Heart left ventricle (tissue), 16 donors: ENCODE measurements at regions of chr2 and their contacts with region 1.

Region 1: GRCh38 chr2:9813312-9814133 is 29.8 kb upstream of the TAF1B start:
- DNase-seq: peak in 4 of 5 donors; percentile 58 to 78 (median 70)
- ATAC-seq: peak; percentile 69 to 90 (median 82)
- H3K4me3 ChIP-seq: peak overlapping the region in 9 of 12 donors; percentile 1 to 37 (median 17)
- H3K27ac ChIP-seq: no peak overlapping the region
- H3K4me1 ChIP-seq: peaks cover 3 to 16% (median 11%) of the 10 kb centered on the region in 12 donors
- H3K27me3 ChIP-seq: no peaks in the 10 kb centered on the region
- CTCF ChIP-seq: peak; percentile 84 to 95 (median 91)
- POLR2A ChIP-seq: no peak

Region 2: GRCh38 chr2:9675415-9676351 is 137.8 kb before region 1 on chr2:
- intact Hi-C with region 1: no loop called
- DNase-seq: no peak
- ATAC-seq: peak in 3 of 4 donors; percentile 36 to 58 (median 54)
- H3K4me3 ChIP-seq: no peak overlapping the region
- H3K27ac ChIP-seq: no peak overlapping the region
- H3K4me1 ChIP-seq: peaks cover 0 to 10% (median 0%) of the 10 kb centered on the region in 12 donors
- H3K27me3 ChIP-seq: no peaks in the 10 kb centered on the region
- CTCF ChIP-seq: no peak
- POLR2A ChIP-seq: no peak

Region 3: GRCh38 chr2:9951272-9951972 is 137.9 kb after region 1 on chr2 and contains the start of gene GRHL1:
- intact Hi-C with region 1: loop called in 3 of 10 experiments (anchors 5 to 10 kb)
- DNase-seq: peak; percentile 94 to 97 (median 95)
- ATAC-seq: peak; percentile 98
- H3K4me3 ChIP-seq: peak within 1 kb of the TSS; percentile 60 to 97 (median 78)
- H3K27ac ChIP-seq: peak within 1 kb of the TSS in 11 of 12 donors; percentile 4 to 75 (median 57)
- H3K4me1 ChIP-seq: peaks cover 0 to 15% (median 3%) of the 10 kb centered on the region in 12 donors
- H3K27me3 ChIP-seq: peaks cover 0 to 28% (median 0%) of the 10 kb centered on the region in 9 donors
- CTCF ChIP-seq: peak in 2 of 12 donors; percentile 3 to 30
- POLR2A ChIP-seq: peak in 1 of 2 donors; percentile 44
- total RNA-seq, gene GRHL1: 0.79 to 2.8 (median 1.1) TPM

Region 4: DNA sequence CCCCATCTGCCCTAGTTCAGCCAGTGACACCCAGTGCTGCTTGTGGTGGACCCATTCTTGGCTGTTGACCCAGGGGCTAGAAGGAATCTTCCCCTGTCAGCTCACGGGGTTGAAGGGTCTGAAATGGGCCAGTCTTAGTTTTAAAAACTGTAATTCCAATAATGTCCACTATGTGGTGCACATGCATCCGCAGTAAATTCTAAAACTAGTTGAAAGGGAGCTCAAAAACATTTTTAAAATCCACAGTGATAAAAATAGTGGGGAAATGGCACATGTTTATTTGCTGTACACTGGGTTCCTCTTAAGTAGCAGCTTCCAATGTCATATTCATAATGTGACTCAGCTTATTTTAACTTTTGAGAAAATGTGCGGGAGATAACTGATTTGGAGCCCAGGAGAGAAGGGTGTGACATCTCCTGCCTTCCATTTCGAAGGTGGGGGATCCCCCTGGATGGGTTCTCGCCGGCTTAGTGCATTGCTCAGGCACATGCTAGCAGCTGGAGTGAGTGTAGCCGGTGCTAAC is 170.8 kb after region 1 on chr2:
- intact Hi-C with region 1: loop called in 1 of 10 experiments (anchors 10 kb)
- DNase-seq: no peak
- ATAC-seq: peak; percentile 47 to 65 (median 53)
- H3K4me3 ChIP-seq: no peak overlapping the region
- H3K27ac ChIP-seq: peak overlapping the region in 3 of 12 donors; percentile 37 to 74 (median 47)
- H3K4me1 ChIP-seq: peaks cover 0 to 38% (median 18%) of the 10 kb centered on the region in 12 donors
- H3K27me3 ChIP-seq: no peaks in the 10 kb centered on the region
- CTCF ChIP-seq: peak; percentile 72 to 96 (median 86)
- POLR2A ChIP-seq: no peak

Region 5: DNA sequence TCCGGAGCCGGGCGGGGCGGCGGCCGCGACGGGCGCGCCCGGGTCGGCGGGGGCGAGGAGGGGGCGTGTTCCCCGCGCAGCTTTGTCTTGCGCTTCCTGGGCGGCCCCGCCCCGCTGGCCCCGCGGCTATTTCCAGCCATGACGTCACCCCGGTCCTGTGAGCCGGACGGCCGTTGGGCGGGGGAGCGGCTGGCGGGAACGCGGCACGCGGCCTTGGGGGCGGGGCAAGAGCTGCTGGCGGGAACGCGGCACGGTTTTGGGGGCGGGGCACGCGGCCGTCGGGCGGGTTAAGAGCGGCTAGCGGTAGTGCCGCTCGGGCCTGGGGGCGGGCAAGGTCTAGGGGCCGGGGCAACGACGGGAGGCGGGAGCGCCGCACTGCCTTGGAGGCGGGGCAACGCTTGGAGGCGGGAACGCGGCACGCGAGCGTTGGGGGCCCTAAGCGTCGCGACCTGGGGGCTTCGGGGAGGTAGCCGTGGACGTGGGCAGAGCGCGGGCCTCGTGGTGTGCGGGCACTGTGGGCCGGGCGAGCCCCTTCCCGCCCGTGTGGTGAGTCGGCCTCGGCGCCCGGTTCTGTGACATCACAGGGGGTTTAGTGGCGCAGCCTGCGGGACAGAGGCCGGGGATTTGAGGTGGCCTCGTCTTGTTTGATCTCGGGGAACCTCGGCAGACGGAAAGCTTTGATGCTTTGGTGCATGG is 230.5 kb after region 1 on chr2:
- intact Hi-C with region 1: loop called in 6 of 10 experiments (anchors 2 to 5 kb)
- DNase-seq: peak; percentile 99
- ATAC-seq: peak; percentile 48 to 83 (median 78)
- H3K4me3 ChIP-seq: peak overlapping the region; percentile 38 to 93 (median 70)
- H3K27ac ChIP-seq: peak overlapping the region; percentile 93 to 100 (median 97)
- H3K4me1 ChIP-seq: peaks cover 15 to 82% (median 64%) of the 10 kb centered on the region in 12 donors
- H3K27me3 ChIP-seq: no peaks in the 10 kb centered on the region
- CTCF ChIP-seq: no peak
- POLR2A ChIP-seq: peak in 1 of 2 donors; percentile 18

Region 6: GRCh38 chr2:10057231-10058107 is 243.9 kb after region 1 on chr2:
- intact Hi-C with region 1: loop called in 1 of 10 experiments (anchors 10 kb)
- DNase-seq: peak; percentile 67 to 87 (median 73)
- ATAC-seq: peak; percentile 13 to 73 (median 65)
- H3K4me3 ChIP-seq: peak overlapping the region in 8 of 12 donors; percentile 8 to 32 (median 25)
- H3K27ac ChIP-seq: peak overlapping the region in 10 of 12 donors; percentile 12 to 73 (median 64)
- H3K4me1 ChIP-seq: peaks cover 0 to 43% (median 27%) of the 10 kb centered on the region in 12 donors
- H3K27me3 ChIP-seq: no peaks in the 10 kb centered on the region
- CTCF ChIP-seq: no peak
- POLR2A ChIP-seq: no peak

Region 7: DNA sequence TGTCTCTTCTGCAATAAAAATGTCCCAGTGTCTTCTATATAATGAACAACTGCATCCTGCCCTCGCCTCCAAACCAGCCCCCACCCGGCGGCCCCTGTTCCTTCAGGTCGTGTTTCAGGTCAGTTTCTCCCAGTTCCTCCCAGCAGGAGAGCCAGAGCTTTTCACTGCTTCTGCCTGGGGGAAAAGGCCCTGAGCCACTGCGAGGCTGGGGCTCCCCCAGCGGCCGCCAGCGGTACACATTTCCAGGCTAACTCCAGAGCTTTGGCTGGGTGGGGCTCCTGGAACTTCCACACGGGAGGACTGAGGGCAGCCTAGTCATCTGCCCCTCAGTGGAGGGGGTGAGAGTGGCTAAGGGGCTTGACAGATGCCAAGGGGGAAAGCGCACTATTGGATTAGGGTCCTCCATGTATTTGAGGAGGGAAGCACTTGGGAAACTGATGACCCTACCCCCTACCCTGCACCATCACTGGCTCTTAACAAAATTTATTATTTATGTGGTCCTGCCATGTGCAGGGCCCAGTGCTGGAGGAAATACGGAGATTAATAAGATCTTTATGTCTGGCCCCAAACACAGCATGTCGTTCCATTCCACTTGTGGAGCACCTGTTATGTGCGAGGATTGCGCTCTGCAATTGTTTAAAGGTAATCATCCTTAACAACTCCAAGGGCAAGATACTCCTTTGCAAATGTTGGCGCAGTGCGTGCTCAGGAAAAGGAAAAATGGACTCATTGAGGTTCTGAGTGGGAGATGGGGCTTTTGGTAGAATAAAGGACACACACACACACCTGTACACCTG is 284.0 kb after region 1 on chr2:
- intact Hi-C with region 1: loop called in 4 of 10 experiments (anchors 5 to 10 kb)
- DNase-seq: peak; percentile 61 to 86 (median 68)
- ATAC-seq: peak; percentile 79 to 97 (median 93)
- H3K4me3 ChIP-seq: no peak overlapping the region
- H3K27ac ChIP-seq: no peak overlapping the region
- H3K4me1 ChIP-seq: peaks cover 0 to 15% (median 2%) of the 10 kb centered on the region in 12 donors
- H3K27me3 ChIP-seq: peaks cover 0 to 19% (median 5%) of the 10 kb centered on the region in 9 donors
- CTCF ChIP-seq: peak; percentile 71 to 96 (median 90)
- POLR2A ChIP-seq: no peak